A549 (cell line): ENCODE measurements at regions of chr9 and their contacts with region 1.

Region 1: GRCh38 chr9:130107234-130107861 is 53.6 kb downstream of the GPR107 start:
- DNase-seq: peak; percentile 59 to 72
- ATAC-seq: peak; percentile 87 to 94
- H3K4me3 ChIP-seq: no peak overlapping the region
- H3K27ac ChIP-seq: no peak overlapping the region
- H3K4me1 ChIP-seq: no peaks in the 10 kb centered on the region
- CTCF ChIP-seq: peak; percentile 88
- EP300 ChIP-seq: no peak
- POLR2A ChIP-seq: no peak
- RAD21 ChIP-seq: peak; percentile 88 to 92

Region 2: GRCh38 chr9:129895376-129896268 is 211.7 kb before region 1 on chr9:
- CTCF ChIA-PET with region 1: no interaction called
- POLR2A ChIA-PET with region 1: no interaction called
- DNase-seq: no peak
- ATAC-seq: no peak
- H3K4me3 ChIP-seq: no peak overlapping the region
- H3K27ac ChIP-seq: no peak overlapping the region
- H3K4me1 ChIP-seq: no peaks in the 10 kb centered on the region
- CTCF ChIP-seq: no peak
- EP300 ChIP-seq: no peak
- POLR2A ChIP-seq: no peak
- RAD21 ChIP-seq: no peak

Region 3: DNA sequence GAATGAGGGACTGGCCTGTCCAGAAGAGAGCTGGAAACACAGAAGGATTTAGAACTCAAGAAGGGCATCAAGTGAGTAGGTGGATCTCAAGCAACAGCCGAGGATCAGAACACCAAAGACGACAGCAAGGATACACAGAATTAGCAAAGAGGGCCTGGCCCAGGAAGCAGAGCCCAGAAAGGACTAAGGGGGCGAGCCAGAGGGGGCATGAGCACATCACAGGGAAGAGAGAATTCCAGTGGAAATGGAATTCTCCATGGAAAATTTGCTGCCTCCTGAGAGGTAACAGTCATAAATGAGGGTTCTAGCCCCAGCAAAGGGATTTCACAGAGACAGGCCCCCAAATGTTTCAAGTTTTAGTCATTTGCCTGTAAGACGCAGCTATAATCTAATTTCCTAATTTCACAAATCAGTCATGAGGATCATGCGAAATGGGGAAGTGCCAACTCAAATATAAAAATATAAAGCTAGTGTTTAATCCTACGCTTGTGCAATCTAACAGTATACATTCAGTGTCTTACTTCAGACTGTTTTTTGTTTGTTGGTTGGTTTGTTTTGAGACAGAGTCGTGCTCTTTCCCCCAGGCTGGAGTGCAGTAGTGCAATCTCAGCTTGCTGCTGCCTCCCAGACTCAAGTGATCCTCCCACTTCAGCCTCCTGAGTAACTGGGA is 111.1 kb before region 1 on chr9:
- CTCF ChIA-PET with region 1: no interaction called
- POLR2A ChIA-PET with region 1: no interaction called
- DNase-seq: no peak
- ATAC-seq: no peak
- H3K4me3 ChIP-seq: no peak overlapping the region
- H3K27ac ChIP-seq: no peak overlapping the region
- H3K4me1 ChIP-seq: peaks cover 9% of the 10 kb centered on the region; the same call in 2 of the 3 replicates
- CTCF ChIP-seq: no peak
- EP300 ChIP-seq: no peak
- POLR2A ChIP-seq: no peak
- RAD21 ChIP-seq: no peak

Region 4: GRCh38 chr9:130029223-130029973 is 78.0 kb before region 1 on chr9:
- CTCF ChIA-PET with region 1: no interaction called
- POLR2A ChIA-PET with region 1: no interaction called
- DNase-seq: no peak
- ATAC-seq: no peak
- H3K4me3 ChIP-seq: no peak overlapping the region
- H3K27ac ChIP-seq: no peak overlapping the region
- H3K4me1 ChIP-seq: peaks cover 19% of the 10 kb centered on the region
- CTCF ChIP-seq: no peak
- EP300 ChIP-seq: no peak
- POLR2A ChIP-seq: no peak
- RAD21 ChIP-seq: no peak

Region 5: GRCh38 chr9:130088051-130088450 is 19.3 kb before region 1 on chr9:
- CTCF ChIA-PET with region 1: interaction called, 72 read pairs
- POLR2A ChIA-PET with region 1: no interaction called
- DNase-seq: no peak
- ATAC-seq: no peak
- H3K4me3 ChIP-seq: no peak overlapping the region
- H3K27ac ChIP-seq: no peak overlapping the region
- H3K4me1 ChIP-seq: no peaks in the 10 kb centered on the region
- CTCF ChIP-seq: no peak
- EP300 ChIP-seq: no peak
- POLR2A ChIP-seq: no peak
- RAD21 ChIP-seq: no peak

Region 6: GRCh38 chr9:130177898-130178805 is 70.8 kb after region 1 on chr9:
- CTCF ChIA-PET with region 1: interaction called, 10 read pairs
- POLR2A ChIA-PET with region 1: no interaction called
- DNase-seq: no peak
- ATAC-seq: no peak
- H3K4me3 ChIP-seq: no peak overlapping the region
- H3K27ac ChIP-seq: no peak overlapping the region
- H3K4me1 ChIP-seq: peaks cover 18% of the 10 kb centered on the region
- CTCF ChIP-seq: no peak
- EP300 ChIP-seq: no peak
- POLR2A ChIP-seq: no peak
- RAD21 ChIP-seq: no peak

Region 7: GRCh38 chr9:130226112-130226681 is 118.8 kb after region 1 on chr9:
- CTCF ChIA-PET with region 1: interaction called, 27 read pairs
- POLR2A ChIA-PET with region 1: no interaction called
- DNase-seq: no peak
- ATAC-seq: no peak; a peak in 1 of 6 replicates
- H3K4me3 ChIP-seq: no peak overlapping the region
- H3K27ac ChIP-seq: no peak overlapping the region
- H3K4me1 ChIP-seq: no peaks in the 10 kb centered on the region
- CTCF ChIP-seq: no peak
- EP300 ChIP-seq: no peak
- POLR2A ChIP-seq: no peak
- RAD21 ChIP-seq: no peak

Region 8: DNA sequence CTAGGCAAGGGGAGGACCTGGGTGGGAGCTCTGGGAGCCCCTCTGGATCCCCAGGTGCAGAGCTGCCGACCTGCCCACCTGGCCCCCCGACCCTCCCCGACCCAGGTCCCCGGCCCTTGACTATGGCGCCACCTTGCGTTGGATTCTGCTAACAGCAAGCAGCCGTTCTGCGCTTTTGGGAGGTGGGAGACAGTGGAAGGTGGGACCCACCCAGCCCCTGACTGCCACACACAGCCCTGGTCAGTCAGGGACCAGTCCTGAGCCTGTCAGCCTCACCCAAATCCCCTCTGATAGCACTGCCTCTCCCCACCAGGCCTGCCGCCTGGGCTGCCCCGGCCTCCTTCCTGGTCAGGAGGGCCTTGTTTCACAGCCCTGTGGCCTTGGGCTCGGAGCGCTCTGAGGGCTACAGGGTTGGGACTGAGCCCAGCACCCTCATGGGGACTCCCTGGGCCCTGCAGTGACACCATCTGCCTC is 236.1 kb after region 1 on chr9:
- CTCF ChIA-PET with region 1: interaction called, 31 read pairs
- POLR2A ChIA-PET with region 1: no interaction called
- DNase-seq: no peak
- ATAC-seq: peak in 1 of 2 experiments; percentile 62; a peak in 3 of 6 replicates
- H3K4me3 ChIP-seq: no peak overlapping the region
- H3K27ac ChIP-seq: no peak overlapping the region
- H3K4me1 ChIP-seq: no peaks in the 10 kb centered on the region
- CTCF ChIP-seq: peak; percentile 74
- EP300 ChIP-seq: no peak
- POLR2A ChIP-seq: no peak
- RAD21 ChIP-seq: peak; percentile 77 to 82